ENCODE measurements at regions of chr6 and their contacts with region 1.

Region 1: GRCh38 chr6:104705095-104705707 is 154.5 kb downstream of the HACE1 start:
- DNase-seq: peak; percentile 83 to 92 (median 88)
- H3K4me3 ChIP-seq: peak overlapping the region in 4 of 7 experiments; percentile 12 to 65 (median 44)
- H3K27ac ChIP-seq: no peak overlapping the region
- H3K4me1 ChIP-seq: peaks cover 34 to 70% (median 49%) of the 10 kb centered on the region in 4 experiments
- H3K27me3 ChIP-seq: no peaks in the 10 kb centered on the region

Region 2: DNA sequence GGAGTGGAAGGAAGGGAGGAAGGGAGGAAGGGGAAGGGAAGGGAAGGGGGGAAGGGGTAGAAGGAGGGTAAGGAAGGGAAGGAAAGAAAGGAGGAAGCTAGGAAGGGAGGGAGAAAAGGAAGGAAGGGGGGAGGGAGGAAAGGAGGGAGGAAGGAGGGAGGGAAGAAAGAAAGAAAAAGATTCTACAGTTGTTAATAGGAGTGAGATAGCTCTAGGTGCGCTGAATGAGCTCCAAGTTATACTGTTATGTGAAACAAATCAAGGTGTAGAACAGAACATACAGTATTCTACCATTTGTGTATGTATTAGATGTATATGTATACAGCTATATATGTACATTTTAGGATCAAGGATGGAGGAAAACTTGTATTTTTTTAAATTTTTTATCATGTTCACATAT is 13.2 kb before region 1 on chr6:
- CTCF ChIA-PET with region 1: interaction called, 12 read pairs
- POLR2A ChIA-PET with region 1: no interaction called
- DNase-seq: no peak
- H3K4me3 ChIP-seq: no peak overlapping the region
- H3K27ac ChIP-seq: no peak overlapping the region
- H3K4me1 ChIP-seq: peaks cover 0 to 15% (median 12%) of the 10 kb centered on the region in 4 experiments
- H3K27me3 ChIP-seq: no peaks in the 10 kb centered on the region

Region 3: DNA sequence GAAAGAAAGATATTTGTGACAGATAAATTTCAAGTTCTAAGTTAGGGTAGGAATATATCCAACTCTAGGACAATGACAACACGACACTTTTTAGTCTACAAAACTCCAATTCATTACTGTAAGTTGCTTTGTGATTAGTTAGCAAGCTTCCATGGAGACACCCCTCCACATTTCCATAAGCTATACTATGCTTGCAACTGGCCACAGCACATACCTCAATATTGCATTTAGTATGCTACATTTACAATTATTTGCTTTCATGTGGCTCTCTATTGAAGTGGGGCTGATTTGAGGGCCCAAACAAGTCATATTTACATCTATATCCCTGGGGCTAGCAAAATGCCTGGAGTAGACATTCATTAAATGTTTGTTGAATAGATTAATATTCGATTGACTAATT is 25.2 kb after region 1 on chr6:
- CTCF ChIA-PET with region 1: no interaction called
- POLR2A ChIA-PET with region 1: no interaction called
- DNase-seq: no peak
- H3K4me3 ChIP-seq: no peak overlapping the region
- H3K27ac ChIP-seq: no peak overlapping the region
- H3K4me1 ChIP-seq: no peaks in the 10 kb centered on the region
- H3K27me3 ChIP-seq: no peaks in the 10 kb centered on the region

Region 4: DNA sequence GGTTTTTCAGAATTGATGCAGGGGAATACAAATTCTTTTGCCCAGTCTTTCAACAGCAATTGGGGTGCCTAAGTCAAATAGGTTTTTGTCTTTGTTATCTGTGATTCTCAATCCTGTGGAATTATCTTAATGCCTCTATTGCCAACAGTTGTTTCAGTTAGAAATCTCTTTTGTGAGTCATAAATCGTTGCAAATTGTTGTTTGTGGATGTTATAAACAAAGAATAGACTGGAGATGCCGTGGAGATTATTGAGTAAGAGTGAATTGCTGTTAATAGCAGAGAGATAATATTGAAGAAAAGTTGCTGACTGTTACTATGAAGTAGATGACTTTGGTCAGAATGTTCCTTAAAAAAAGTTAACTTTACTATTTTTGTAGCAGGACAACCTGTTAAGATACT is 538.3 kb after region 1 on chr6:
- CTCF ChIA-PET with region 1: no interaction called
- POLR2A ChIA-PET with region 1: no interaction called
- DNase-seq: no peak
- H3K4me3 ChIP-seq: no peak overlapping the region
- H3K27ac ChIP-seq: no peak overlapping the region
- H3K4me1 ChIP-seq: no peaks in the 10 kb centered on the region
- H3K27me3 ChIP-seq: peaks cover 0 to 5% (median 0%) of the 10 kb centered on the region in 5 experiments

Region 5: GRCh38 chr6:106014930-106015329 is 1309.7 kb after region 1 on chr6:
- CTCF ChIA-PET with region 1: no interaction called
- POLR2A ChIA-PET with region 1: no interaction called
- DNase-seq: no peak
- H3K4me3 ChIP-seq: no peak overlapping the region
- H3K27ac ChIP-seq: no peak overlapping the region
- H3K4me1 ChIP-seq: no peaks in the 10 kb centered on the region
- H3K27me3 ChIP-seq: peaks cover 0 to 7% (median 3%) of the 10 kb centered on the region in 5 experiments

Measured in common myeloid progenitor, CD34-positive (primary cell).